ENCODE measurements at regions of chr14 and their contacts with region 1.

Region 1: DNA sequence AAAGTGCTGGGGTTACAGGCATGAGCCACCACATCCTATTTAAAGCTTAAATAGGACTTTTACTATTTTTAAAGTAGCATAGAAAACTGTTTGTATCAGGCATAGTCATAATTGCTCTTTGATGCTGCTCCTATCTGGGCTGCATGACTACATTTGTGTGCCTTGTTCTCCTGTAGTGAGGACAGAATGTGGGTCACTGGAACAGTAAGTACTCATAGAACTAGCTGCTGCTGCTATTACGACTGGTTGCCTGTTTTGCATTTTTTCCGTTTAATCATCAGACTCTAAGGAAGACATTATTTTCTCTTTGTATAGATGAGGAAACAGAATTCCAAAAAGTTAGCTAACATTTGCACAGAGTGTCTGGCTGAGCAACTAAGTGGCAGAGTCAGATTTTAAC is 42.8 kb downstream of the ZC3H14 start:
- DNase-seq: no peak
- ATAC-seq: no peak
- H3K4me3 ChIP-seq: no peak overlapping the region
- H3K4me3 Mint-ChIP-seq: no peak overlapping the region
- H3K27ac ChIP-seq: no peak overlapping the region
- H3K27ac Mint-ChIP-seq: no peak overlapping the region
- H3K4me1 ChIP-seq: no peaks in the 10 kb centered on the region
- H3K4me1 Mint-ChIP-seq: peaks cover 3% of the 10 kb centered on the region
- H3K27me3 ChIP-seq: no peaks in the 10 kb centered on the region
- H3K27me3 Mint-ChIP-seq: no peaks in the 10 kb centered on the region
- CTCF ChIP-seq: no peak

Region 2: DNA sequence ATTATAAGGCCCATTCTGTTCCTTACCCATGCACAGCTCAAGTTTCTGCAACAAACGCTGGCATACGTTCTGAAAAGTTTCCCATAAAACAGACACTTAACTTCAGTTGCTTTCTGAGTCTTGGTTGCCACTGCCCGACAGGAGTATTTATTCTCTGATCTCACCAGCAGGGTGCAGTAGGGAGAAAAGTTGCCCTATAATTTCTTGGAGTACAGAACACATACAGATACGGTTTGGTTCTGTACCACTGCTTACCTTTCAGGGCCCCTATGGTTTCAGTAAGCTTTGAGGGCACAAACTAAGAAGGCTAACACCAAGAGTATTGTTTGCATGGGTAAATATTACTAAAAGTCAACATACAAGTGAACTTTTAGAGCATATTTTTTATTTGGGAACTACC is 142.3 kb before region 1 on chr14:
- CTCF ChIA-PET with region 1: no interaction called
- POLR2A ChIA-PET with region 1: no interaction called
- intact Hi-C with region 1: no loop called
- DNase-seq: peak in 2 of 9 experiments; percentile 7 to 14
- ATAC-seq: no peak
- H3K4me3 ChIP-seq: no peak overlapping the region
- H3K4me3 Mint-ChIP-seq: no peak overlapping the region
- H3K27ac ChIP-seq: no peak overlapping the region
- H3K27ac Mint-ChIP-seq: no peak overlapping the region
- H3K4me1 ChIP-seq: no peaks in the 10 kb centered on the region
- H3K4me1 Mint-ChIP-seq: no peaks in the 10 kb centered on the region
- H3K27me3 ChIP-seq: no peaks in the 10 kb centered on the region
- H3K27me3 Mint-ChIP-seq: no peaks in the 10 kb centered on the region
- CTCF ChIP-seq: peak; percentile 40

Region 3: GRCh38 chr14:88590173-88590572 is 15.4 kb before region 1 on chr14:
- CTCF ChIA-PET with region 1: no interaction called
- POLR2A ChIA-PET with region 1: no interaction called
- intact Hi-C with region 1: loop called in 1 of 2 experiments (anchors 2 kb)
- DNase-seq: no peak
- ATAC-seq: no peak
- H3K4me3 ChIP-seq: no peak overlapping the region
- H3K4me3 Mint-ChIP-seq: no peak overlapping the region
- H3K27ac ChIP-seq: no peak overlapping the region
- H3K27ac Mint-ChIP-seq: peak overlapping the region; percentile 39
- H3K4me1 ChIP-seq: no peaks in the 10 kb centered on the region
- H3K4me1 Mint-ChIP-seq: peaks cover 3% of the 10 kb centered on the region
- H3K27me3 ChIP-seq: no peaks in the 10 kb centered on the region
- H3K27me3 Mint-ChIP-seq: no peaks in the 10 kb centered on the region
- CTCF ChIP-seq: no peak

Region 4: GRCh38 chr14:88628462-88628861 is 22.9 kb after region 1 on chr14:
- CTCF ChIA-PET with region 1: no interaction called
- POLR2A ChIA-PET with region 1: no interaction called
- intact Hi-C with region 1: loop called in 1 of 2 experiments (anchors 2 kb)
- DNase-seq: no peak
- ATAC-seq: no peak
- H3K4me3 ChIP-seq: no peak overlapping the region
- H3K4me3 Mint-ChIP-seq: no peak overlapping the region
- H3K27ac ChIP-seq: no peak overlapping the region
- H3K27ac Mint-ChIP-seq: no peak overlapping the region
- H3K4me1 ChIP-seq: no peaks in the 10 kb centered on the region
- H3K4me1 Mint-ChIP-seq: no peaks in the 10 kb centered on the region
- H3K27me3 ChIP-seq: no peaks in the 10 kb centered on the region
- H3K27me3 Mint-ChIP-seq: no peaks in the 10 kb centered on the region
- CTCF ChIP-seq: no peak

Measured in CD8-positive, alpha-beta T cell (primary cell).